HepG2 (cell line): ENCODE measurements at regions of chr17 and their contacts with region 1.

Region 1: DNA sequence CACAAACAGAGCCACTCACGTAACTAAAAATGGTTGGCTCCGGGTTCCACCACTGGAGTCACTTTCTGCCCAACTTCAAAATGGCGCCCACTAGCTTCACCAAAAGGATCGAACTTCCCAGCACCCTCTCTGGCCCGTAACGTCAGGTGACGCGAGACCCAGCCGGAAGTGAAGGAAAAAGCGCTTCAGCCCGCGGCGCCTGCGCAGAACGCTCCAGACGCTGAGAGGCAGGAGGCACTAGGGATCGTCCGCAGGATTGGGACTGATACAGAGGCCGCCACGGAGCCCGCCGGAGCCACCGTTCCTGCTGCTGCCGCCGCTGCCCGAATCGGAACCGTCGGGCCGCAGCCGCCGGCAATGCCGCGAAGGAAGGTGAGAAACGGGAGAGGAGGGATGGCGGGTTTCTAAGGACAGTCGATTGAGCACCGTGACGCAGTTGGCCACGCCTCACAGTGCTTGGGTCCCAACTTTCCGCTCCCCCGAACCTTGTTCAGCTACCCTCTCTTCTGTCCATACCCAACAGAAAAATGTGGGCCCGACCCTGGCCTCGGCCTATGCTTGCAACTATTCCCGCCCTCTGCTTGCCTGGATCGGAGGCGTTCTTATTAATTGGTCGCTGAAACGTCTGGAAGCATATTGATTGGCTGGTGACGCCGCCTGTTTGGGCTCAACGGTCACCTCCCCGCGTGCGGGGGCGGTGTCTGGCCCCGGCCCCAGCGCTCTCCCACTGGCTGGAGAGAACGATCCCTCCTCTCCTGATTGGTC is at the start of gene KAT7:
- DNase-seq: peak; percentile 99
- ATAC-seq: peak; percentile 98
- H3K4me3 ChIP-seq: peak within 1 kb of the TSS; percentile 82 to 100 (median 97)
- H3K27ac ChIP-seq: peak within 1 kb of the TSS; percentile 98
- H3K4me1 ChIP-seq: peaks cover 26% of the 10 kb centered on the region
- H3K27me3 ChIP-seq: no peaks in the 10 kb centered on the region
- CTCF ChIP-seq: no peak; the same call in 1 of the 2 replicates
- EP300 ChIP-seq: no peak; a peak in 1 of 4 replicates
- POLR2A ChIP-seq: peak; percentile 94 to 99
- RAD21 ChIP-seq: peak; percentile 47; the same call in 1 of the 2 replicates
- total RNA-seq, gene KAT7: 39.2 and 43.8 TPM in 2 replicates

Region 2: GRCh38 chr17:49748791-49749190 is 39.9 kb before region 1 on chr17:
- CTCF ChIA-PET with region 1: no interaction called
- POLR2A ChIA-PET with region 1: interaction called, 15 read pairs
- in situ Hi-C with region 1: no loop called
- intact Hi-C with region 1: no loop called
- DNase-seq: no peak
- ATAC-seq: no peak
- H3K4me3 ChIP-seq: no peak overlapping the region
- H3K27ac ChIP-seq: peak overlapping the region; percentile 2
- H3K4me1 ChIP-seq: peaks cover 46% of the 10 kb centered on the region
- H3K27me3 ChIP-seq: no peaks in the 10 kb centered on the region
- CTCF ChIP-seq: no peak
- EP300 ChIP-seq: no peak
- POLR2A ChIP-seq: no peak
- RAD21 ChIP-seq: no peak

Region 3: DNA sequence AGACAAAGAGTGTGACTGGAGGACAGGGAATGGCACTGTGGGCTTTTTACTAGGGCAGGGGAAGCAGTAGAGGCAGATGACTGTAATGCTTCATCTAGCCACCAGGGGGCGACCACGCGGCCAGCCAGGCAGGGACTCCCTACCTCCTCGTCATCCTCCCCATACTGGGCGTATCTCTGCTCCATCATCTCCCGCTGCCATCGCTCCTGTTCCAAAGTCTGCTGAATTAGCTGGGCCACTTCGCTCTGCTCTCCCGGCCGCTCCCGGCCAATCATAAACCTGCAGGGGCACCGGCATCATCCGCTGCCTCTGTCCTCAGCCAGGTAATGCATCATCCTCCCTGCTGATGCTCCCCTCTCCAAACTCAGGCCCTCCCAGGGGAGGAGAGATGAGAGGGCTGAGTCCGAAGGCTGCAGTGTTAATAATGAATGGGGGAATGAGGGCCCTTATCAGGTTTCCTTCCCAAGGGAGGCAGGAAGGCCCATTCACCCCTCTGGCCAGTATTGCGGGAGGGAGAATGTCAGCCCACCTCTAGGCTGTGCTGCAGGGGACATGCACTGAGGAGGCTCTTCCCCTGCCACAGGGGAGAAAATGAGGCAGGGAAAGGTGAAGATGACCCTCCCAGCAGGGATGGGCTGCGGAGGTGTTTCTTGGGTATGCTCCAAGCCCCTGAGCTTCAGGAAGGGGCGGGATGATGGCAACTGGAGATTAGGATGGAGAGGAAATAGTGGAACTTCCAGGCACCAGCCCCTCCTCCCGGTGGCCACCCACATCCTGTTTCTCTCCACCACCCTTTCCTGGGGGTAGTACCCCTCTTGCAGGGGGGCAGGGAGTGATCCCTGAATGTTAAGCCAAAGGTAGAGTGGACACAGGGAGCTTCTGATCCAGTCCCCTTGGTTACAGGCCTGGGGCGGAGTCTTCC is 351.6 kb after region 1 on chr17:
- CTCF ChIA-PET with region 1: no interaction called
- POLR2A ChIA-PET with region 1: no interaction called
- in situ Hi-C with region 1: no loop called
- intact Hi-C with region 1: no loop called
- DNase-seq: peak; percentile 77
- ATAC-seq: peak; percentile 83
- H3K4me3 ChIP-seq: no peak overlapping the region
- H3K27ac ChIP-seq: no peak overlapping the region
- H3K4me1 ChIP-seq: peaks cover 13% of the 10 kb centered on the region
- H3K27me3 ChIP-seq: no peaks in the 10 kb centered on the region
- CTCF ChIP-seq: peak; percentile 95
- EP300 ChIP-seq: no peak
- POLR2A ChIP-seq: no peak
- RAD21 ChIP-seq: peak; percentile 92